Adrenal gland (tissue), 19 donors: ENCODE measurements at regions of chr12 and their contacts with region 1.

Region 1: GRCh38 chr12:129911428-129912049 is 7.7 kb upstream of the TMEM132D start:
- DNase-seq: peak; percentile 20 to 69 (median 47)
- H3K4me3 ChIP-seq: no peak overlapping the region
- H3K27ac ChIP-seq: no peak overlapping the region
- H3K4me1 ChIP-seq: no peaks in the 10 kb centered on the region
- H3K27me3 ChIP-seq: no peaks in the 10 kb centered on the region
- CTCF ChIP-seq: peak; percentile 41 to 80 (median 72)
- POLR2A ChIP-seq: no peak

Region 2: DNA sequence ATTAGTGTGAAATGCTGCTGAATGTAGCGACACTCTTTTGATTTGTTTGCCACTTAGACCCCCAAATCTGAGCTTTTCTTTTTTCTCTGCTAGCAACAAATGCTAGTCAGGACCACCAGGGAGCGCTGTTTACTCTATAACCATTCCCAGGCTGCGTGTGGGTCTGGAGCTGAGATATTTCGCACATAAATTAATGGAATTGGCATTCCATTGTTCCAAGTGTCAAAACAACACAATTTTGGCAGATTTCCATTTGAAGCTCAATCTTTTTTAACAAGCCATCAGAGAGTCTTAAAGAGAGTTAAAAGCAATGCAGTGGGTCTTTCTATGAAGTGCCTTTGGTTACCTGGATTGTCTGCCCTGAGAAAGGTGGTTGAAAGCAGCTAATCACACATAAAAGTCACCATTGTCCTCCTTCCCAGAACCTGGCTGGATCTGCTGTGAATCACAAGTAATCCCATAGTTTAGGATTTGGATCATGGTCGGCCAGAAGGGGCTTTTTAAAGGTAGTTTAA is 1651.9 kb before region 1 on chr12:
- intact Hi-C with region 1: loop called in 1 of 2 experiments (anchors 10 kb)
- DNase-seq: peak in 6 of 7 donors; percentile 27 to 57 (median 36)
- H3K4me3 ChIP-seq: no peak overlapping the region
- H3K27ac ChIP-seq: no peak overlapping the region
- H3K4me1 ChIP-seq: no peaks in the 10 kb centered on the region
- H3K27me3 ChIP-seq: no peaks in the 10 kb centered on the region
- CTCF ChIP-seq: peak; percentile 52 to 76 (median 69)
- POLR2A ChIP-seq: no peak

Region 3: DNA sequence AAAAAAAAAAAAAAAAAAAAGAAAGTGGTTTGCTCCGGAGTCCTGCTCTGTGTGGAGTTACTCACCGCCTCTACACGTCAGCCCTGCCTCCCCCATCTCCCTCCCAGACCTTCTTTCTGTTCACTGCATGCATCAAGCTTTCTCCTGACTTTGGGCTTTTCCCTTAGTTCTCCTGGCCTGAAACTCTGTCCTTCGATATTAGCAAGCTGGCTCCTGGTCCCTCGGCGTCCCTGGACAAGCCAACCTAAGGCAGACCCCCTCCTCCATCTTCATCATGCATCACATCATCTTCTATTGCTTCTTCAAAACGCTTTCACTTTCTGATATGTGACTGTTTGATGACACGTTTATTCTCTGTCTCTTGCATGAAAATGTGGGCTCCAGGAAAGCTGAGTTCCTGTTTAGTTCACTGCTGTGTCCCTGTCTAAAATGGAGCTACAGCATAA is 1128.4 kb before region 1 on chr12:
- intact Hi-C with region 1: loop called in 1 of 2 experiments (anchors 5 kb)
- DNase-seq: no peak
- H3K4me3 ChIP-seq: no peak overlapping the region
- H3K27ac ChIP-seq: no peak overlapping the region
- H3K4me1 ChIP-seq: no peaks in the 10 kb centered on the region
- H3K27me3 ChIP-seq: no peaks in the 10 kb centered on the region
- CTCF ChIP-seq: no peak
- POLR2A ChIP-seq: no peak

Region 4: DNA sequence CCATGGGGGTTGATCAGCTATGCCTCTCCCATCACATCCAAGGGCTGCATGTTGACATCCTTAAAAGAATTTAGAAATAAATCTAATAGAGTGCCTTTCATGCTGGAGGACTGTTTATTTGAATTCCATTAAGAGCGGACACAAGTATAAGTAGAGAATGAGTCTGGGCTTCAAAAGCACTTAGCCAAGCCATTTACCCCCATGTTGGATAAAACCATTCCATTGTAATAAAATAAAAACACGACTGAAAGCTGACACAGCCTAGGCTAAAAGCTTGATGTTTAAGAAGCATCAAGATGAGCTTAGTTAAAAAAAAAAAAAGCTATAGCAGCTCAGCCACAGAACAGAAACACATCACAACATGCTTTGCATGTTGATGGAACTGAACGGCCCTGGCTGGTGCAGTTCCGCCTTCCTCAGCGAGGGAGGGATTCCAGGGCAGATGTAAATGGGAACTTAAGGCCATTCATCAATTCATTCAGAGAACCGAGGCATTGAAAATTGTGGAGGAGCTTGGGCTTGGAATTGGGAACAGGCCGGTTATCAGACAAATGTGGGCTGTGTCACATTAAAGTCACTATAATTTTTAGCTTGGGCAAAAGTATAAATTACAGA is 48.9 kb before region 1 on chr12:
- intact Hi-C with region 1: no loop called
- DNase-seq: no peak
- H3K4me3 ChIP-seq: no peak overlapping the region
- H3K27ac ChIP-seq: no peak overlapping the region
- H3K4me1 ChIP-seq: no peaks in the 10 kb centered on the region
- H3K27me3 ChIP-seq: no peaks in the 10 kb centered on the region
- CTCF ChIP-seq: no peak
- POLR2A ChIP-seq: no peak